ENCODE measurements at regions of chr2 and their contacts with region 1.

Region 1: GRCh38 chr2:25276569-25277465 is 64.9 kb downstream of the DNMT3A start:
- DNase-seq: peak in 1 of 2 experiments; percentile 26
- ATAC-seq: peak in 1 of 2 experiments; percentile 65; a peak in 3 of 6 replicates
- H3K4me3 ChIP-seq: no peak overlapping the region
- H3K27ac ChIP-seq: no peak overlapping the region
- H3K4me1 ChIP-seq: no peaks in the 10 kb centered on the region
- CTCF ChIP-seq: peak; percentile 49
- EP300 ChIP-seq: no peak
- POLR2A ChIP-seq: no peak
- RAD21 ChIP-seq: no peak

Region 2: DNA sequence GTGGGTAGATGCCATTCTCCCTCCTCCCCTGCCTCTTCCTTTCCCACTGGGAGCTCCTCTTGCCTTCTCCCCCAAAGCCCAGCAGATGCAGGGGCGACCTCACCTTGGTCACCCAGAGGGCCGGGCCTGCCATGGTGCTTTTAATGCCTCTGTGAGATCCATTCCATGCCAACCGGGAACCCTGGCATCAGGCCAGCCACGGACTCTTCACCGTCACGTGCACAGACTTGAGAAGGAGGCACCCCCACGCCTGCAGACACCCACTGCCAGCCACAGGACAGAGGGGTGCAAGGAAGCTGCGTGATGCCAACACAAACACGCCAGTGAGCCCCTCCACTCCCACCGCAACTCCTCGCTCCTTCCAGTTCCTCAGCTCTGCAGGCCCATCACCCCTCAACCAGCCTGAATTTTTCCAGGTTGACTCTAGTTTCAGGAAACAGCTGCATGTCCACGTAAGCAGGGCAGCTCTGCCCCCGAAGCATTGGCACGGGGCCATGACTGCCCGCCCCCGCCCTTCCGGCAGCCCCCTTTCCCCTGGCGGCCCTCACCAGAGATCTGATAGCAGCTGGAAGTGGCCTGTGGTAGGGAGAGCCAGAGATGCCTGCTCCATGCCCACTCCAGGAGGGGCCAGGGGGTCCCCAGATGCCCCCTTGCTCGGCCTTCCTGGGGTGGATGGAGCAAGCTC is 14.1 kb after region 1 on chr2:
- CTCF ChIA-PET with region 1: interaction called, 13 read pairs
- POLR2A ChIA-PET with region 1: no interaction called
- DNase-seq: no peak
- ATAC-seq: no peak
- H3K4me3 ChIP-seq: no peak overlapping the region
- H3K27ac ChIP-seq: no peak overlapping the region
- H3K4me1 ChIP-seq: 0 out of 3 replicates have a peak, but pooled peaks cover 6% of the 10 kb centered on the region
- CTCF ChIP-seq: no peak
- EP300 ChIP-seq: no peak
- POLR2A ChIP-seq: no peak
- RAD21 ChIP-seq: no peak